Activated CD4-positive, alpha-beta memory T cell treated with anti-CD3 and anti-CD28 coated beads for 36 hours (primary cell): ENCODE measurements at regions of chr4 and their contacts with region 1.

Region 1: GRCh38 chr4:74675673-74676279 is 118.5 kb downstream of the BTC start:
- DNase-seq: no peak
- H3K4me3 Mint-ChIP-seq: no peak overlapping the region
- H3K27ac Mint-ChIP-seq: no peak overlapping the region
- H3K4me1 Mint-ChIP-seq: no peaks in the 10 kb centered on the region
- H3K27me3 Mint-ChIP-seq: peaks cover 3% of the 10 kb centered on the region

Region 2: DNA sequence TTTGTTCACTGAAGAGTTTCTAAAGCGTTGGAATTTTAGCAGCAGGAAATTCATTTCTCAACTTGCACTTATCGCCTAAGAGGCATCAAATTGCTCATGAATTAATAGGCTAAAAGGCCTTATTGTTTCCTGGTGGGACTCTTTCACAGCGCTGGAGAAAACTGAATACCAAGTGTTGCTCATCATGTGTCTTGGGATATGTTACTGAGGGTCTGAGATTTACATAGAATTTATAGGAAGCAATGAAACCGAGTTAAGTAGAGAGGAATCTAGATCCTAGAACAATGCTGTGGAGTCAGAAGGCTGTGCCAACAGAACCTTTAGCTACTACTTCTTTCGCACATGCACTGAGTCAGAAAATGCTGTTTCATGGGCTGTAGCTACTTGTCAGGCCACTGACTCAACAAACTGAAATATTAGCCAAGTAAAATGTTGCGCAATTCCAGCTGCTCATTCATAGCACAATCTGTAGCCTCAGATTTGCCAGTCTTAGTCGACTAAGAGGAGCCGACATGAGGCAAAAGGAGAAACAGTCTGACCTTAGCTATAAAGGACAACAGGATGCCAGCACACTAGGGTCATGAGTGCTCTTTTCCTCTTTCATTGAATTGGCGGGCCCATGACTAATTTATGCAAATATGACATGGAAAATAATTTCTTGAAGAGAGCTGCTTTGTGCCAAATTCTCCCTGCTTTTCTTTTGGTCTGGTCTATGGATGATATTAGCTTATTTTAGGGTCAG is 971.3 kb before region 1 on chr4:
- CTCF ChIA-PET with region 1: no interaction called
- POLR2A ChIA-PET with region 1: no interaction called
- intact Hi-C with region 1: no loop called
- DNase-seq: no peak
- H3K4me3 Mint-ChIP-seq: no peak overlapping the region
- H3K27ac Mint-ChIP-seq: no peak overlapping the region
- H3K4me1 Mint-ChIP-seq: no peaks in the 10 kb centered on the region
- H3K27me3 Mint-ChIP-seq: peaks cover 10% of the 10 kb centered on the region

Region 3: DNA sequence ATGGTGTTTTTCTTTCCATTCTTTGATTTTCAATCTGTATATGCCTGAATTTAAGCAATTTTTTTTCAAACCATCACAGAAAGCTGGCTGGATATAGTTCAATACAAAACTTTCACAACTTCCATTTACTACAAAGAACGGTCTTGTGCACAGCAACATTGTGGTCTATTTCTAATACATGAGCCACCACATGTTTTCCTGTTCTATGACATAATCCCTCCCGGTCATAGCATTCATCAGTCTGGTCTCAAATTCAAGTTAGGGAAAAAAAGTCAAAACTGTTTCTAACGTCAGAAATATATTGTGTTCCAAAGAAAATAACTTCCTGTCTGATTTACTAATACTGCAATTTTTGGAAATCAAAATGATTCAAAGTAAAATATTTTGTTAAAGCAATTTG is 846.8 kb before region 1 on chr4:
- CTCF ChIA-PET with region 1: no interaction called
- POLR2A ChIA-PET with region 1: no interaction called
- intact Hi-C with region 1: no loop called
- DNase-seq: no peak
- H3K4me3 Mint-ChIP-seq: no peak overlapping the region
- H3K27ac Mint-ChIP-seq: no peak overlapping the region
- H3K4me1 Mint-ChIP-seq: no peaks in the 10 kb centered on the region
- H3K27me3 Mint-ChIP-seq: no peaks in the 10 kb centered on the region

Region 4: DNA sequence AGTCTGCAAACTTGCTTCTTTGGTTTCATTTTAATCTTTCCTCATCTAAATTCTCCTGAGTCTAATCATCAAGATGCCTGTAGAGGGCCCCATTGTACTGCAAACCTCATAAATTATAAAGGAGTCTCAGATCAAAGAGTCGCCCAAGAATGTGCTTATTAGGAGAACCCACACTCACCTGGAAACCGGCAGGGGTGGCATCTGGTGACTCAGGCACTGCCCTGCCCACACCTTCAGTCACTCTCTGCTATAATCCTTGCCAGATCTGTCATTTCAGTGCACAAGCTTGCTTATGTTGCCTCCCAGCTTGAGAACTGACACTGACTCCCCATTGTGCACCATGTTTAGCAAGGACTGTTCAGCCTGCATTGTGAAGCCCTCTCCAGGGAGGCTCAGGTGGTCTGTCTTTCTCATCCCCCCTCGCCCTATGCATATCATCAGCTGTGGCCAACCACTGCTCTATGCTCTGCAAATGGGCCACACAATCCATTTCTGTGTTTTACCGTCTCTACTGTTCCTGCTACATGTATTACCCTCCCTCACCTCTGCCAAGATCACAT is 355.1 kb before region 1 on chr4:
- CTCF ChIA-PET with region 1: interaction called, 14 read pairs
- POLR2A ChIA-PET with region 1: no interaction called
- intact Hi-C with region 1: loop called (anchors 1 kb)
- DNase-seq: peak; percentile 48
- H3K4me3 Mint-ChIP-seq: no peak overlapping the region
- H3K27ac Mint-ChIP-seq: no peak overlapping the region
- H3K4me1 Mint-ChIP-seq: no peaks in the 10 kb centered on the region
- H3K27me3 Mint-ChIP-seq: peaks cover 14% of the 10 kb centered on the region

Region 5: DNA sequence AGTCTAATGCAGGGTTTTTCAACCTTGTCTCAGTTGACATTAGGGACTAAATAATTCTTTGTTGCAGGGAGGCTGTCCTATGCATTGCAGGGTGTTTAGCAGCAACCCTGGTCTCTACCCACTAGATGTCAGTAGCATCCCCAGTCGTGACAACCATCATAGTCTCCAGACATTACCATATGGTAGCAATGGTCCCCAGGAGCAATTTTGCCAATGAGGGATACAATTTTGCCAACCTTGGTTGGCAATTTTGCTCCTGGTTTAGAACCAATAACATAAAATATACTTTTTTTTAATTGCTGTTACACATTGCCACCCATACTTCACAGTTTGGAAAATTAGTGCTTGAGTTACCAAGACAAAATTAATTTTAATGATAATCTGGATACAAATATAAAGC is 304.9 kb before region 1 on chr4:
- CTCF ChIA-PET with region 1: interaction called, 22 read pairs
- POLR2A ChIA-PET with region 1: no interaction called
- intact Hi-C with region 1: loop called (anchors 1 kb)
- DNase-seq: peak; percentile 36
- H3K4me3 Mint-ChIP-seq: no peak overlapping the region
- H3K27ac Mint-ChIP-seq: no peak overlapping the region
- H3K4me1 Mint-ChIP-seq: peaks cover 3% of the 10 kb centered on the region
- H3K27me3 Mint-ChIP-seq: peaks cover 18% of the 10 kb centered on the region

Region 6: DNA sequence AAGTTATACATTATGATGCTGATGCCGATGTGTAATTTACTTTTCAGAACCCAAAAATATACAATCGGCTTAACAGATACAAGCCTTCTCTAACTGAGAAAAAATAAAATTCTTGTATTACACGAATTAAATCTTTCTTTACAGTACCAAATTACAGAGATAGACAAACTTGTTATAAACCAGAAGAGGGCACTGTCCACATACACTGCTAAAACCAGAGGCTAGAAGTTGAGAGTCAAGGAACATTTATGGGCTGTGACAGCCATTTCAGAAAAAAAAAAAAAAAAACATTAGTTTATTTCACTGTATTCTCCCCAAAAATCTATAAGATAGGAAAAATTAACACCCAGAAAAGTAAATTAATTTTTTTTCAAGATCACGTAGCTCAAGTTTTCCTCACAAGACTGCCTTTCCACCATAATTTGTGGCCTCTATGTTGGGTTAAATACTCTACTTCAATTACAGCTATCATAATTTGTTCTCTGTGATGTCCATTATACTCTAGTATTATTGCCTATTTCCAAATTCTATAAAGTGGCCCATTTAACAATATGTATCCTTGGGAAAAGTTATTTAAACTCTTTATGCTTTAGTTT is 298.8 kb before region 1 on chr4:
- CTCF ChIA-PET with region 1: interaction called, 22 read pairs
- POLR2A ChIA-PET with region 1: no interaction called
- intact Hi-C with region 1: loop called (anchors 1 kb)
- DNase-seq: no peak
- H3K4me3 Mint-ChIP-seq: no peak overlapping the region
- H3K27ac Mint-ChIP-seq: no peak overlapping the region
- H3K4me1 Mint-ChIP-seq: peaks cover 3% of the 10 kb centered on the region
- H3K27me3 Mint-ChIP-seq: peaks cover 5% of the 10 kb centered on the region

Region 7: GRCh38 chr4:74659576-74660411 is 16.0 kb before region 1 on chr4:
- CTCF ChIA-PET with region 1: no interaction called
- POLR2A ChIA-PET with region 1: no interaction called
- intact Hi-C with region 1: no loop called
- DNase-seq: no peak
- H3K4me3 Mint-ChIP-seq: no peak overlapping the region
- H3K27ac Mint-ChIP-seq: no peak overlapping the region
- H3K4me1 Mint-ChIP-seq: peaks cover 3% of the 10 kb centered on the region
- H3K27me3 Mint-ChIP-seq: peaks cover 14% of the 10 kb centered on the region